ENCODE measurements at regions of chr10 and their contacts with region 1.

Region 1: GRCh38 chr10:100046021-100046486 is 35.6 kb downstream of the CPN1 start:
- DNase-seq: peak; percentile 82
- H3K4me3 Mint-ChIP-seq: no peak overlapping the region
- H3K27ac Mint-ChIP-seq: no peak overlapping the region
- H3K4me1 Mint-ChIP-seq: peaks cover 19% of the 10 kb centered on the region
- H3K27me3 Mint-ChIP-seq: no peaks in the 10 kb centered on the region
- CTCF ChIP-seq: peak; percentile 90

Region 2: DNA sequence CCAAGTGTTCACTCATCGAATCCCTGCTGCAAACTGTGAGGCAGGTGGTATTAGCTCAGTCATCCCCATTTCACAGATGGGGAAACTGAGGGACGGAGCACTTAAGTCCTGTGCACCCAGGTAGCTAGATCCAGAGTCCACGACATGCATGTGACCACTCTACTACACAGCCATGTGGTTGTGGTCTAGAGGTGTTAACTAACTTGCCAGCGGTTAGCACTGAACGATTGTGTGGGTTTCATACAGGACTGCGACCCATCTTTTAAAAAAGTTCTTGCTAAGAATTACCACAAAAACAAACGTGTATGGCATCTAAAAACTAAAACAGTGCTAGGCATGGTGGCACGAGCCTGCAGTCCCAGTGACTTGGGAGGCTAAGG is 279.8 kb before region 1 on chr10:
- CTCF ChIA-PET with region 1: no interaction called
- POLR2A ChIA-PET with region 1: no interaction called
- intact Hi-C with region 1: no loop called
- DNase-seq: no peak
- H3K4me3 Mint-ChIP-seq: no peak overlapping the region
- H3K27ac Mint-ChIP-seq: no peak overlapping the region
- H3K4me1 Mint-ChIP-seq: peaks cover 2% of the 10 kb centered on the region
- H3K27me3 Mint-ChIP-seq: no peaks in the 10 kb centered on the region
- CTCF ChIP-seq: no peak

Region 3: DNA sequence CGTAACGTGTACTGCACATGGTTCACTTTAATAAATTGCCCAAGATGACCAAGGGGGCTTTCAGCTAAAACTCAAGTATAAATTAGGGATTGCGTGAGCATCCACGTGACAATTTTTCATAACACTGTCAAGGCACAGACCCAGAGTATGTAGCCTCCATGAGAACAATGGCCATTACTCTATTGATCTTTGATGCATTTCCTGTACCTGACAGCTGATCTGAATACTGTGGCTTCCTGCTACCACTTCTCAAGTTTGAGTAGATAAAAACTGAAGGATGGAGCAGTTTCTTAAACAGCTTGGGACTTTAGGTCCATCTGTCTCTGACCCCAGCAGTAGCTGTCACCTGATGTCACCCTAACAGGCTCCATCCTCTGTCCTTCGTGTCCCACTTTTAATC is 164.7 kb before region 1 on chr10:
- CTCF ChIA-PET with region 1: interaction called, 10 read pairs
- POLR2A ChIA-PET with region 1: no interaction called
- intact Hi-C with region 1: no loop called
- DNase-seq: no peak
- H3K4me3 Mint-ChIP-seq: no peak overlapping the region
- H3K27ac Mint-ChIP-seq: no peak overlapping the region
- H3K4me1 Mint-ChIP-seq: no peaks in the 10 kb centered on the region
- H3K27me3 Mint-ChIP-seq: no peaks in the 10 kb centered on the region
- CTCF ChIP-seq: no peak

Region 4: DNA sequence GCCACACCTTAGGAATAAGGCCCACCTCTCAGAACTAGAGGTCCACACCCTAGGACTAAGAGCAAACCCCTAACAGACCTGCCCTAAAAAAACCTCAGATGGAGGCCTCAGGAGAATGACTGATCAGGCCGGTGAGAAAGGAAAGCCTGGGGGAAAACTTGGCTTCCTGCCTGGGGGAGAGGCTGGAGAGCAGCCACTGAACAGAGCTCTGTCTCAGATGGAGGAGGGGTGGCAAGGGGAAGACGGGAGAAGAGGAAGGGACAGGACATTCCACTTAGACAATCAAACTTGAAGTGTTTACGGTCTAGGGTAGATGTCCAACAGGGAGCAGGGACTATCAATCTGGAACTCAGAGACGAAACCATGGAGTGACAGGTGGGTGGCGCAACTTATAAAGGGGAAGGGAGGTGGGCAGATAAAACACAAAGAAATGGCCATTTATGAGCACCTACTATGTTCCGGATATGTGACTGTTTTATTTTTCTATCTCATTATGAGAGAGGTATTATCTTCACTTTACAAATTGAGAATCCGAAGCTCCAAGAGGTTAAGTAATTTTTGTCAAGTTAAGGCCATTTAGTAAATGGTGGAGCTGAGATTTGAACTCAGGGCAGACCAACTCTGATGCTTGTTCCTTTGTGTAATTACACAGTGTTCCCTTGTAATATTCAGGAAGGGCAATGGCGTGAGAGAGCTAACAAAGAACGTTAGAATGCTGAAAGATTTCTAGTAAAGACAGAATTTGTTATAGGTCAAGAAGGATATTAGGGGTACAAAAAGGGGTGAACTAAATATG is 118.9 kb before region 1 on chr10:
- CTCF ChIA-PET with region 1: interaction called, 19 read pairs
- POLR2A ChIA-PET with region 1: interaction called, 3 read pairs
- intact Hi-C with region 1: no loop called
- DNase-seq: peak; percentile 73
- H3K4me3 Mint-ChIP-seq: peak overlapping the region; percentile 42
- H3K27ac Mint-ChIP-seq: peak overlapping the region; percentile 44
- H3K4me1 Mint-ChIP-seq: peaks cover 50% of the 10 kb centered on the region
- H3K27me3 Mint-ChIP-seq: no peaks in the 10 kb centered on the region
- CTCF ChIP-seq: no peak

Region 5: GRCh38 chr10:99976886-99977665 is 69.0 kb before region 1 on chr10:
- CTCF ChIA-PET with region 1: interaction called, 55 read pairs
- POLR2A ChIA-PET with region 1: interaction called, 56 read pairs
- intact Hi-C with region 1: loop called (anchors 1 kb)
- DNase-seq: peak; percentile 88
- H3K4me3 Mint-ChIP-seq: peak overlapping the region; percentile 67
- H3K27ac Mint-ChIP-seq: peak overlapping the region; percentile 100
- H3K4me1 Mint-ChIP-seq: peaks cover 24% of the 10 kb centered on the region
- H3K27me3 Mint-ChIP-seq: no peaks in the 10 kb centered on the region
- CTCF ChIP-seq: no peak

Region 6: DNA sequence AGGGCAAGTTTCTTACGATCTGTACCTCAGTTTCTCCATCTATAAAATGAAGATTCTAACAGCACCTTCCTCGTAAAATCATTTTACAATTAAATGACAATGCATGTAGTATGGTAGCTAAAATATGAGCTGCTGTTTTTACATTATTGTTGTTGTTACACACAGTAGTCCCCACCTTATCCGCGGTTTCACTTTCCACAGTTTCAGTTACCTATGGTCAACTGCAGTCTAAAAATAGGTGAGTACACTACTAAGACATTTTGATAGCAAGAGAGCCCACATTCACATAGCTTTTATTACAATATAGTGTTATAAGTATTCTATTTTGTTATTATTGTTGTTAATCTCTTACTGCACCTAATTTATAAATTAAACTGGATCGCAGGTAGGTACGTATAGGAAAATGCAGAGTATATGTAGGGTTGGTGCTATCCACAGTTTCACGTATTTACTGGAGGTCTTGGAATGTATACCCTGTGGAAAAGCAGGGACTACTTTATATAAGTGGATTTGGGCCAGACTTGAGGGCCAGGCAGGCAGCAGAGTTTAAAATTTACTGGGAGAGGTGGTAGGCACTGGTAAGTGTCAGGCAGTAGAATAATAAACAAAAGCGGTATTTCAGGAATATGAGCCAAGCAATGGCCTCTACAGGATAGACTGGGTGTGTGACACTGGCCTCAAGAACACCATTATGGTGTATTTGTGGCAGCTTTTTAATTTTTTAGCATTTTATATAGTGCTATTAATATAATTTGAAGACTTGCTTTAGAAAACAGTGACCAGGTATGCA is 46.5 kb before region 1 on chr10:
- CTCF ChIA-PET with region 1: interaction called, 14 read pairs
- POLR2A ChIA-PET with region 1: interaction called, 10 read pairs
- intact Hi-C with region 1: no loop called
- DNase-seq: no peak
- H3K4me3 Mint-ChIP-seq: no peak overlapping the region
- H3K27ac Mint-ChIP-seq: no peak overlapping the region
- H3K4me1 Mint-ChIP-seq: peaks cover 30% of the 10 kb centered on the region
- H3K27me3 Mint-ChIP-seq: no peaks in the 10 kb centered on the region
- CTCF ChIP-seq: no peak

Region 7: DNA sequence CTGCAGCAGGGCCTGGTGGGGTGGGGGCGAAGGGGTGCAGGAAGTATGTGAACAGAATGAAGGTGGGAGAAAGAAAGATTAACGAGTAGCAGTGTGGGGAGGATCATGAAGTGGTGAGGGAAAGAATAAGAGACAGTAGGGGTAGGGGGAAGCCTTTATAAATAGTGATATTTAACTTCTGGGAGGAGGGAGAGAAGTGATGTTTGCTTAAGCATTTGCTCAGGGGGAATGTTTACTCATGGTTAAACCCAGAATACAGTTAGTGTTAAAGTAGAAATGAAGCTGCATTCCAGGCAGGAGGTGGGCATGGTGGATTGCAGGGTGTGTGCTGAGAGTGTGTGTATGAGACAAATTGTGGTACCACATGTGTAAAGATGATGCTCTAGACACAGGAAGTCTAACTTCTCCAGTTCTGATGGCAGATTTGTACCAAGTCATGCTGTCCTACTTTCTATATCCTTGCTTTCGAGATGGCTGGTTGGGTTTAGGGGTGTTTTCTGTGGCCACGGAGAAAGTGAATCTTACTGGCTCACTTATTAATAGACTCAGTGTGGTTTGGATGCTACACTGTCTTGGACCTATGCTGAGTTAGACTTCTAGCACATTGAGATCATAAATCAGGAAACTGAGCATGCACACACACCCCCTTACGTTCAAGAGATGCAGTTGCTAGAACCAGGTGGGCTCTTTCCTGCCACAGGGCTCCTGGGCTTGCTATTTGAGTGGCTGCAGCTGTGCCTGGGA is 25.7 kb before region 1 on chr10:
- CTCF ChIA-PET with region 1: interaction called, 20 read pairs
- POLR2A ChIA-PET with region 1: interaction called, 5 read pairs
- intact Hi-C with region 1: no loop called
- DNase-seq: no peak
- H3K4me3 Mint-ChIP-seq: no peak overlapping the region
- H3K27ac Mint-ChIP-seq: no peak overlapping the region
- H3K4me1 Mint-ChIP-seq: no peaks in the 10 kb centered on the region
- H3K27me3 Mint-ChIP-seq: no peaks in the 10 kb centered on the region
- CTCF ChIP-seq: no peak

Region 8: DNA sequence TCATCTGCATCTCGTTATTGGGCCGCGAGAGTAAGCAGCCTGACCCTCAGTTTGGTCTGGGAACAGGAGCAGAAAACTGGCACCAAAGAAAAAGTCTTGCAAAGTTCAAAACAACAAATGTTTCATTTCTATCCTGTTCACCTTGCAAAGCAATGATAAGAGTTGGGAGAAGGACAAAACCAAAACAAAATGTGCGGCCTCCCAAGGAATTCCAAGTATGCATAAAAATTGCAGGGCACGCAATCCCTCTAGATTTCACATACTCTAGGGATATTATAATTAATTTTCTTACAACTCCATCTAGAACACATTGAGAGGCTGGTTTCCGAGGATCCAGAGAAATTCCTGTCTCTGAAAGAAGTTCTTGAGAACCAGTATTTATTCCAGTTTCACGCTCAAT is 163.2 kb after region 1 on chr10:
- CTCF ChIA-PET with region 1: no interaction called
- POLR2A ChIA-PET with region 1: no interaction called
- intact Hi-C with region 1: no loop called
- DNase-seq: no peak
- H3K4me3 Mint-ChIP-seq: no peak overlapping the region
- H3K27ac Mint-ChIP-seq: no peak overlapping the region
- H3K4me1 Mint-ChIP-seq: no peaks in the 10 kb centered on the region
- H3K27me3 Mint-ChIP-seq: no peaks in the 10 kb centered on the region
- CTCF ChIP-seq: no peak

Region 9: GRCh38 chr10:100346765-100347567 is 300.9 kb after region 1 on chr10 and contains the start of gene SCD:
- CTCF ChIA-PET with region 1: no interaction called
- POLR2A ChIA-PET with region 1: no interaction called
- intact Hi-C with region 1: no loop called
- DNase-seq: peak; percentile 97
- H3K4me3 Mint-ChIP-seq: peak within 1 kb of the TSS; percentile 97
- H3K27ac Mint-ChIP-seq: peak within 1 kb of the TSS; percentile 83
- H3K4me1 Mint-ChIP-seq: peaks cover 53% of the 10 kb centered on the region
- H3K27me3 Mint-ChIP-seq: no peaks in the 10 kb centered on the region
- CTCF ChIP-seq: no peak
- total RNA-seq, gene SCD: 101 and 179 TPM in 2 replicates

Measured in MCF 10A (cell line).